Gastrocnemius medialis (tissue), 4 donors: ENCODE measurements at regions of chr9 and their contacts with region 1.

Region 1: DNA sequence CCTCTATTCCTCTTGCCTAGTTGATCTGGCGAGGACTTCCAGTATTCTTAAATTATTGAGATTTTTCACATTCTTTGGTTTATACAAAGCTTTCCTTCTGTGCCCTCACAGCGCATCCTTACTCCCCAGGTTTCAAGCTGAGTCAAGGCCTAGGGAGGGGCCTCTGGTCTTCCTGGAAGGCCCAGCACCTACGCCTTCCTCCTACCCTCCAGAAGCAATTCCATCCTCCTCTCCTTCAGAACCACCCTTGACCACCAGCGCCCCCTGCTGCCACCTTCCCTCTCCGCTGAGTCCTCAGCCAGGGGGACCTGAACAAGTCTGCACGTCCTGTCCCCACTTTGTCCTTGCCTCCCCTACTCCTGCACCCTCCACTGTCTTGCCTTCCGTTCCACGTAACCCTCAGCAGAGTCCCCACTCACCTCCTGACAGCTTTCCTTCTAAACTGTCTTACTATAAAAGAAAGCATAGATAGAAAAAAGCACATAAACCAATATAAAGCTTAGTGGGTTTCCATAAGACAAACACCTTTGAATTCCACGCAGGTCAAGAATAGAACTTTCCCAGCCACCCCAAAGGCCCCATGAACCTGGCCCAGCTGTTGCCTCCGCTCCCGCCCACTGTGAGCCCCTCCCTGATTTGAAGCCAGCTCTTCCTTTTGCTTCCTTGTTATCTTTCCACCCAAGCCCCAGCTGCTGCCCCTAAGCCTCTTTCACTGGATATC is 63.0 kb upstream of the CTSL start:
- DNase-seq: peak in 1 of 2 donors; percentile 31
- ATAC-seq: no peak
- H3K4me3 ChIP-seq: no peak overlapping the region
- H3K27ac ChIP-seq: no peak overlapping the region
- H3K4me1 ChIP-seq: no peaks in the 10 kb centered on the region
- H3K27me3 ChIP-seq: no peaks in the 10 kb centered on the region
- CTCF ChIP-seq: peak; percentile 38 to 76 (median 66)
- POLR2A ChIP-seq: no peak

Region 2: GRCh38 chr9:86413966-86414880 is 1248.7 kb before region 1 on chr9:
- in situ Hi-C with region 1: loop called in 2 of 4 experiments (anchors 25 kb)
- intact Hi-C with region 1: no loop called
- DNase-seq: no peak
- ATAC-seq: peak in 1 of 2 donors; percentile 50
- H3K4me3 ChIP-seq: no peak overlapping the region
- H3K27ac ChIP-seq: no peak overlapping the region
- H3K4me1 ChIP-seq: no peaks in the 10 kb centered on the region
- H3K27me3 ChIP-seq: no peaks in the 10 kb centered on the region
- CTCF ChIP-seq: peak; percentile 60 to 76 (median 72)
- POLR2A ChIP-seq: no peak

Region 3: GRCh38 chr9:86424251-86424891 is 1238.6 kb before region 1 on chr9:
- in situ Hi-C with region 1: loop called in 3 of 4 experiments (anchors 10 to 25 kb)
- intact Hi-C with region 1: no loop called
- DNase-seq: no peak
- ATAC-seq: no peak
- H3K4me3 ChIP-seq: no peak overlapping the region
- H3K27ac ChIP-seq: no peak overlapping the region
- H3K4me1 ChIP-seq: no peaks in the 10 kb centered on the region
- H3K27me3 ChIP-seq: peaks cover 0 to 3% (median 0%) of the 10 kb centered on the region in 3 donors
- CTCF ChIP-seq: no peak
- POLR2A ChIP-seq: no peak

Region 4: DNA sequence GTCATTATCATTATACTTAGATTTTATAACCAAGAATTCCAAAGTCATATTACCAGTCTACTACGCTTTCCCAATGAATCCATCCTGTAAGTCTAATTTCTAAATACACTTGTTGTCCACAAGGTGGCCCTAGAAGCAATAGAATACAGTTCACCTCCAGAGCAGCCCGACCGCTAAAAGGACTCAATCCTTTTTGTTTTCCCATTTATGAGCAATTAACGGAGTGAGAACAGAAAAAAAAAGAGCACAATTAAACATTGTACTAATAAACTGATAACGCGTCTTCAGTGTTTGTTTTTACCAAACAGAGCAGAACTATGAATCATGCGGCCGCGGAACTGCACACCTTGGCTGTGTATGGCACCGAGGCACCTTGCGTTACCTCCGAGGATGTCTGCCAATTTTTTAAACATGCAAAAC is 326.0 kb before region 1 on chr9:
- in situ Hi-C with region 1: loop called (anchors 5 to 10 kb)
- intact Hi-C with region 1: loop called (anchors 2 kb)
- DNase-seq: no peak
- ATAC-seq: peak; percentile 55 to 73
- H3K4me3 ChIP-seq: peak overlapping the region in 3 of 4 donors; percentile 6 to 23 (median 11)
- H3K27ac ChIP-seq: no peak overlapping the region
- H3K4me1 ChIP-seq: no peaks in the 10 kb centered on the region
- H3K27me3 ChIP-seq: peaks cover 0 to 6% (median 0%) of the 10 kb centered on the region in 3 donors
- CTCF ChIP-seq: peak; percentile 42 to 62 (median 60)
- POLR2A ChIP-seq: no peak

Region 5: DNA sequence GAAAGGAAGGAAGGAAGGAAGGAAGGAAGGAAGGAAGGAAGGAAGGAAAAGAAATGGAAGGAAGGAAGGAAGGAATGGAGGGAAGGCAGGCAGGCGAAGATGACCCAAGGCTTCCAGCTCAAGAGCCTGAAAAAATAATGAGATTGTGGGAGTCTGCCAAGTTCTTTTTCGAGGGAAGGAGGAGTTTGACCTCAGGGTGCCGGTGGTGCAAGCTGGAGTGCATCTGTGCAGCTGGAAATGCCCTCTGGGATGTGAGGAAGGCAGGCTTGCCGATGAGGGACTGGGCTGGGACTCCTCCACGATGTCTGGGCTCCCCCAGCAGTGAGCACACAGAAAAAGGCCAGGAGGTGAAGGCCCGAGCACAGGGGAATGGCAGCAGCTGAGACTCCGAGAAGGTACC is 320.2 kb before region 1 on chr9:
- in situ Hi-C with region 1: loop called (anchors 5 to 10 kb)
- intact Hi-C with region 1: loop called (anchors 2 kb)
- DNase-seq: peak in 1 of 2 donors; percentile 14
- ATAC-seq: no peak
- H3K4me3 ChIP-seq: no peak overlapping the region
- H3K27ac ChIP-seq: no peak overlapping the region
- H3K4me1 ChIP-seq: no peaks in the 10 kb centered on the region
- H3K27me3 ChIP-seq: peaks cover 0 to 3% (median 0%) of the 10 kb centered on the region in 3 donors
- CTCF ChIP-seq: no peak
- POLR2A ChIP-seq: no peak

Region 6: GRCh38 chr9:87497604-87498045 is 165.3 kb before region 1 on chr9 and contains the start of gene DAPK1:
- in situ Hi-C with region 1: no loop called
- intact Hi-C with region 1: loop called (anchors 5 kb)
- DNase-seq: peak in 1 of 2 donors; percentile 12
- ATAC-seq: peak; percentile 50 to 63
- H3K4me3 ChIP-seq: peak within 1 kb of the TSS; percentile 66 to 76 (median 72)
- H3K27ac ChIP-seq: peak within 1 kb of the TSS; percentile 7 to 62 (median 44)
- H3K4me1 ChIP-seq: peaks cover 6 to 18% of the 10 kb centered on the region in 2 donors
- H3K27me3 ChIP-seq: peaks cover 0 to 4% (median 2%) of the 10 kb centered on the region in 3 donors
- CTCF ChIP-seq: no peak
- POLR2A ChIP-seq: peak; percentile 30 to 56
- total RNA-seq, gene DAPK1: 1.2 to 4.3 (median 2.7) TPM

Region 7: DNA sequence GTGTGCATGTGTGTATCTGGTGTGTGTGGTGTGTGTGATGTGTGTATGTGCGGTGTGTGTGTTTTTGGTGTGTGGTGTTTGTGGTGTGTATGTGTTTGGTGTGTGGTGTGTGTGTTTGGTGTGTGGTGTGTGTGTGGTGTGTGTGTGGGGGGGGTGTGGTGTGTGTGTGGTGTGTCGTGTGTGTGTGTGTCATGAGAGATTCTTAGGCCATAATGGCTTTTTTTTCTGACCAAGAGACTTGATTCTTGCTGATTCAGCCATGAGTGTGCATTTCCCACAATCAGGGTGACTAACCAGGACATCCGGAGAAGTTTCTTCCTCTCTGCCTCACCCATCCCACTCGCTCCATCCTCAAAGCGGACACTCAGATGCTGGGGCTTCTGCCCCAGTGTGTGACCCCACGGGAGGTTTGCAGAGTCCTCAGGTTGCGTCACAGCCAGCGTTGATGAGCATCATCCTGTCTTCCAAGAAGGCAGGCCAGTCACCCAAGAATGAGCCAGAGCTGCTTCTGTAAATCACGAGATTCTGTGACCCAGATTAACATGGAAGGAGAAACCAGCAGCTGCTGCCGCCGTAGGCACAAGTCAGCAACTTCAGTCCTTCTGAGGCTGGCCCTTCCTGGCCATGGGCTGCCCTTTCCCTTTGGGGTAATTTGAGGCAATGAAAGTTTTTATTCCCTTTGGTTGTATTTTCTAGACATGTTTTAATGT is 50.5 kb after region 1 on chr9:
- in situ Hi-C with region 1: no loop called
- intact Hi-C with region 1: no loop called
- DNase-seq: peak; percentile 82 to 89
- ATAC-seq: peak; percentile 90 to 93
- H3K4me3 ChIP-seq: peak overlapping the region in 1 of 4 donors; percentile 3
- H3K27ac ChIP-seq: peak overlapping the region; percentile 63 to 73 (median 66)
- H3K4me1 ChIP-seq: peaks cover 7 to 13% of the 10 kb centered on the region in 2 donors
- H3K27me3 ChIP-seq: no peaks in the 10 kb centered on the region
- CTCF ChIP-seq: no peak
- POLR2A ChIP-seq: no peak